ENCODE measurements at regions of chr1 and their contacts with region 1.

Region 1: GRCh38 chr1:221794079-221794670 is 52.3 kb upstream of the DUSP10 start:
- DNase-seq: peak; percentile 77
- H3K4me3 Mint-ChIP-seq: peak overlapping the region; percentile 45
- H3K27ac Mint-ChIP-seq: peak overlapping the region; percentile 90
- H3K4me1 Mint-ChIP-seq: peaks cover 36% of the 10 kb centered on the region
- H3K27me3 Mint-ChIP-seq: no peaks in the 10 kb centered on the region

Region 2: DNA sequence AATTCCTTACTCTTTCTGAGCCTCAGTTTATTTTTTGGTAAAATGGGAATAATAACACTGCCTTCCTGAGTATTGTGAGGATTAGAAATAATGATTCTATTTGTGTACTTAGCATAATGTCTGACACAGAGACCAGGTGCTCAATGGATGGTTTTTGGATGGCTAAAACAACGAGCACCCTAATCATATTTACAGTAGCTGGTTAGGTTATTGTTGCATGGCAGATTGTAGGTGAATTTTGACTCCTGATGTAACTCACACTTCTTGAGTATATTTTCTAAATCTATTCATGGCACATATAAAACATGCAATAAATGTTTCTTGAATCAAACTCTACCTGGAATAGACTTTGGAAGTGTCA is 40.4 kb before region 1 on chr1:
- intact Hi-C with region 1: loop called (anchors 1 kb)
- DNase-seq: no peak
- H3K4me3 Mint-ChIP-seq: peak overlapping the region; percentile 38
- H3K27ac Mint-ChIP-seq: peak overlapping the region; percentile 86
- H3K4me1 Mint-ChIP-seq: peaks cover 55% of the 10 kb centered on the region
- H3K27me3 Mint-ChIP-seq: no peaks in the 10 kb centered on the region

Region 3: GRCh38 chr1:221809031-221810029 is 15.2 kb after region 1 on chr1:
- intact Hi-C with region 1: loop called (anchors 2 kb)
- DNase-seq: peak; percentile 54
- H3K4me3 Mint-ChIP-seq: peak overlapping the region; percentile 6
- H3K27ac Mint-ChIP-seq: peak overlapping the region; percentile 67
- H3K4me1 Mint-ChIP-seq: peaks cover 32% of the 10 kb centered on the region
- H3K27me3 Mint-ChIP-seq: no peaks in the 10 kb centered on the region

Region 4: GRCh38 chr1:221829327-221830015 is 35.3 kb after region 1 on chr1:
- intact Hi-C with region 1: loop called (anchors 1 kb)
- DNase-seq: peak; percentile 84
- H3K4me3 Mint-ChIP-seq: peak overlapping the region; percentile 73
- H3K27ac Mint-ChIP-seq: peak overlapping the region; percentile 90
- H3K4me1 Mint-ChIP-seq: peaks cover 67% of the 10 kb centered on the region
- H3K27me3 Mint-ChIP-seq: no peaks in the 10 kb centered on the region

Region 5: GRCh38 chr1:221878134-221878533 is 84.0 kb after region 1 on chr1:
- intact Hi-C with region 1: loop called (anchors 1 kb)
- DNase-seq: no peak
- H3K4me3 Mint-ChIP-seq: no peak overlapping the region
- H3K27ac Mint-ChIP-seq: no peak overlapping the region
- H3K4me1 Mint-ChIP-seq: peaks cover 10% of the 10 kb centered on the region
- H3K27me3 Mint-ChIP-seq: peaks cover 2% of the 10 kb centered on the region

Region 6: GRCh38 chr1:221910222-221910621 is 116.0 kb after region 1 on chr1:
- intact Hi-C with region 1: no loop called
- DNase-seq: no peak
- H3K4me3 Mint-ChIP-seq: no peak overlapping the region
- H3K27ac Mint-ChIP-seq: no peak overlapping the region
- H3K4me1 Mint-ChIP-seq: peaks cover 10% of the 10 kb centered on the region
- H3K27me3 Mint-ChIP-seq: peaks cover 2% of the 10 kb centered on the region

Measured in activated CD4-positive, alpha-beta T cell treated with anti-CD3 and anti-CD28 coated beads, Interleukin-2, amount 10 ng/mL, durations not matched to agents 24 days and 14 days (primary cell).